ENCODE measurements at regions of chr2 and their contacts with region 1.

Region 1: DNA sequence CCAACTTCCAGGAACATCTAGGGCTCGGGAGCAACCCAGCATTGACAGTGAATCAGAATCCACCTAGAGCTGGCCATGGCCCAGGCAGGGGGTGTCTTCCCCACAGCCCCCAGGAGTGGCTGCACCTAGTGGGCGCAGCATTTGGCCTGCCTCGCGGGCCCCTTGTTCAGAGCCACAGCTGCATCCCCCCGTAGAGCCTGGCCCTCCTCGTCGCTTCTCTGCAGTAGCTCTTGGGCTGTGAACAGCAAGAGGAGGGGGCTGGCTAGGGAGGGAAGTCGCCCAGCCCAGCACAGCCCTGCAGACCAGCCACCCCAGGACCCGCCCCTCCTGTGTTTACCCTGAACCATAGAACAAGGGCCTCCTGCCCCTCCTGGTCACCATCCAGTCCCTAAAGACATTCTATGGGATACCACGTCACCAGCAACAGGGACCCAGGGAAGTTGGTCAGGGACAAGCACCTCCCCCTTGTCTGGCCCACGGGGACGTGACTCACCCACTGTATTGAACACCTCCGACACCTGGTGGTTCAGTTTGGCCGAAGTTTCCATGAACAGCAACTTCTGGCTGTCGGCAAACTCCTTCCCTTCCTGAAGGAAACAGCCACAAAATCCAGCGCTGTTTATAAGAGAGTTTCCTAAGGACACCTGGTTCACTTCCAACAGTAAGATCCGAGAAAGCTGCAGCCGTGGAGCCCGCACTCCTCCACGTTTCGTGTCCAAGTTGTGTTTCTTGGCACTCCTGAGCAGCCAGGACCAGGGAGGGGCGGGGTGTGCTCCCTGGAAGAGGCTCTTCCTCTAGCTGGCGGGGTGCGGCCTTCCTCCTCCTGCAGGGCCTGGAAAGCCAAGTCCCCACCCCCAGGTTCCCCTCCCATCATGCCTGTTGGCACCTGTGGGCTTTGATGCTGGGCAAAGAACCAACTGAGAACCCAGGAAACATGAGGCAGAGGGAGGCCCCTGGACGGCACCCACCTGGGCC is 8.8 kb downstream of the PRLH start:
- DNase-seq: peak; percentile 81 to 86
- H3K4me3 ChIP-seq: peak overlapping the region in 1 of 3 donors; percentile 26
- H3K27ac ChIP-seq: peak overlapping the region; percentile 76 to 89
- H3K4me1 ChIP-seq: peaks cover 3 to 7% of the 10 kb centered on the region in 2 donors
- H3K27me3 ChIP-seq: no peaks in the 10 kb centered on the region
- CTCF ChIP-seq: peak; percentile 13 to 45 (median 25)
- POLR2A ChIP-seq: no peak

Region 2: GRCh38 chr2:237993701-237994100 is 418.5 kb after region 1 on chr2:
- intact Hi-C with region 1: loop called (anchors 5 kb)
- DNase-seq: no peak
- H3K4me3 ChIP-seq: no peak overlapping the region
- H3K27ac ChIP-seq: no peak overlapping the region
- H3K4me1 ChIP-seq: no peaks in the 10 kb centered on the region
- H3K27me3 ChIP-seq: no peaks in the 10 kb centered on the region
- CTCF ChIP-seq: no peak
- POLR2A ChIP-seq: no peak

Measured in breast epithelium (tissue), 4 donors.